ENCODE measurements at regions of chr20 and their contacts with region 1.

Region 1: DNA sequence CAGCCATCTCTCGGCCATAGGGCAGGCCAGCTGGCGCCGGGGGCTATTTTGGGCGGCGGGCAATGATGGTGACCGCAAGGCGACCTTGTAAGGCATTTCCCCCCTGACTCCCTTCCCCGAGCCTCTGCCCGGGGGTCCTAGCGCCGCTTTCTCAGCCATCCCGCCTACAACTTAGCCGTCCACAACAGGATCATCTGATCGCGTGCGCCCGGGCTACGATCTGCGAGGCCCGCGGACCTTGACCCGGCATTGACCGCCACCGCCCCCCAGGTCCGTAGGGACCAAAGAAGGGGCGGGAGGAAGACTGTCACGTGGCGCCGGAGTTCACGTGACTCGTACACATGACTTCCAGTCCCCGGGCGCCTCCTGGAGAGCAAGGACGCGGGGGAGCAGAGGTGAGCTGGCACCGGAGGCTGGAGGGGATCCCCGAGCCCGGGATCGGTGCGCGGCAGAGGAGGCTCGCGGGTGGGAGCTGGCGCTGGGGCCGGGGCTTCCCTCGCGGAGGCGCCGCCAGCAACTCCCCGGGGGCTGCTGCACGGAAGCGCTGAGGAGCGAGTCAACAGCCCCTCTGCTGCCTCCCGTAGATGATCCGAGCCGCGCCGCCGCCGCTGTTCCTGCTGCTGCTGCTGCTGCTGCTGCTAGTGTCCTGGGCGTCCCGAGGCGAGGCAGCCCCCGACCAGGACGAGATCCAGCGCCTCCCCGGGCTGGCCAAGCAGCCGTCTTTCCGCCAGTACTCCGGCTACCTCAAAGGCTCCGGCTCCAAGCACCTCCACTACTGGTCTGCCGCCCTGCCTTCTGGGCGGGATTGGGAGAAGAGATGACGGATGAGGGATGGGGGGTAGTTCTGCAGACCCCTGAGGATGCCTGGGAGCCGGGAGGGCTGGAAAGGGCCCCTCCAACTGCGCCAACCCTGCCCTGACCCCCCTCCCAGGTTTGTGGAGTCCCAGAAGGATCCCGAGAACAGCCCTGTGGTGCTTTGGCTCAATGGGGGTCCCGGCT is at the starts of genes CTSA and NEURL2:
- DNase-seq: peak; percentile 54
- H3K4me3 ChIP-seq: peak within 1 kb of the TSS; percentile 80
- CTCF ChIP-seq: peak; percentile 12

Region 2: DNA sequence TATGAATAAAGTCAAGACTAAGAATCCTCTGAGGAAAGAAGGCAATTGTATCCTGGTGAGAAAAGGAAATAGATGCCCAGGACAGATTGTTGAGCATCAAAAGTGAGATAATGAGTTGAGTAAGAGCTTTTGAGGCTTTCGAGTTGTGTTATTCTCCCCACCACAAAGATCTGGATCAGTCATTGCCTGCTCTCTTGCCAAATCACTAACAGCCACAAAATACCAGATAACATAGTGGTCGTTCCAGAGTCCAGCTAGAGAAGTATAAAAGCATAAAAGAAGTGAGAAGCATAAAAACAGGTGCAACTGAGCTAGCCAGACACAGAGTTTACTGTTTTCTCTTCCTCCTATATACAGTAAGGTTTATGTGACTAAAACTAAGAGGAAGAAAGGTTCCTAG is 164.2 kb before region 1 on chr20:
- CTCF ChIA-PET with region 1: no interaction called
- POLR2A ChIA-PET with region 1: no interaction called
- DNase-seq: no peak
- H3K4me3 ChIP-seq: no peak overlapping the region
- CTCF ChIP-seq: no peak

Region 3: GRCh38 chr20:45792332-45792686 is 99.0 kb before region 1 on chr20:
- CTCF ChIA-PET with region 1: no interaction called
- POLR2A ChIA-PET with region 1: no interaction called
- DNase-seq: no peak
- H3K4me3 ChIP-seq: peak overlapping the region; percentile 86
- CTCF ChIP-seq: no peak

Region 4: DNA sequence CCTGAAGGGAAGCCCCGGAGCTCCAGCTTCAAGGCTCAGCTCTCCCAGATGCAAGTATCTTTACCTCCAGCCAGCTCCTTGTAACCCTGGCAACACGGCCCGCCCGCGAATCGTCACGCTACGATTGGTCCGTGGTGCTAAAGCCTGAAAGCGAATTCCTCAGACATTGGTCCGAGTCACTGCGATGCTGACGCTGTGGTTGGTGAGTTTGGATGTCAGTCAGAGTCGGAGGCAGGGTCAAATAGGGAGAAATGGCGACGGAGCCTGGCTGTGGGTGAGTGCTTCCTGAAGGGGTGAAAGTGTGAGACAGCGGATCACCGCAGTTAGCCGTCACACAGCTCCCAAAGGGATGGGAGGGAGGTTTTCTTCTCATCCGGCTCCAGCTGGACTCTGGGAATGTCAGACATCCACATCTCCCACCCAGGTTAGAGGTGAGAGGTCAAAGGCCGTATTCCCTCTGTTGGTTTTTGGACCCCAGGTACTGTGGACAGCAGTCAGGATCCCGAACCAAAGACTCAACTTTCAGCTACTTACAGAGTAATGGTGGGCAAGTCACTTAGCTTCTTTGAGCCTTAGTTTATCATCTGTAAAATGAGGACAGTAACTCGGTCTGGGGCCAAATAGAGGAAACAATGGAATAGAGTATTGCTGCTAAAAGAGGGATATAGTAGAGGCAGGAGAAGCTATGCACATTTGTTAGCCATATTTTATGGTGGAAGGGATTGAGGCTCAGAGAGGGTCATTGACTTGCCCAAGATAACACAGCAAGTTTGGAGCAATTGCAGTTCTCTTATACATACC is 10.1 kb before region 1 on chr20 and contains the start of gene ZSWIM1:
- CTCF ChIA-PET with region 1: interaction called, 50 read pairs
- POLR2A ChIA-PET with region 1: interaction called, 21 read pairs
- DNase-seq: peak; percentile 94
- H3K4me3 ChIP-seq: peak within 1 kb of the TSS; percentile 82
- CTCF ChIP-seq: no peak

Region 5: DNA sequence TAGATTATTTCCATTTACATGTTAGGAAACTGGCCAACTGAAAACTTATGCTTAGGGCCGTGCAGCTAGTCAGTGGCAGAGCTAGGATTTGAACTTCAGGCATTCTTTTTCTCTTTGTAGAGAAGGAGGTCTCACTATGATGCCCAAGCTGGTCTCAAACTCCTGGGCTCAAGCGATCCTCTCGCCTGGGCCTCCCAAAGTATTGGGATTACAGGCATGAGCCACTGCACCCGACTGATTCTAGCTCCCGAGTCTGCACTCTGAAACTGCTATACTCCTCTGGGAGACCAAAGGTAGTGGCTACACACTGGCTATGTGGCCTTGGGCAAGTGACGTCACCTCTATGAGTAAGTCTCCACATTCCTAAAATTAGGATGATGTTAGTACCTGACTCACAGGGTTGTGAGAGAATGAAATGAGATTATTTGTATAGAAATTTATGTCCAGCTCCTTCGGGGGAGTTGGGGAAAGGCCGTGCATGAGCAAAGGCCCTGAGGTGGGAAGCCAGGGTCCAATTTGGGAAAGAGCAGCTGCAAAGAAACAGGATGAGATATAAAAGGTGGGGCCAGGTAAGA is 14.3 kb after region 1 on chr20:
- CTCF ChIA-PET with region 1: interaction called, 22 read pairs
- POLR2A ChIA-PET with region 1: interaction called, 4 read pairs
- DNase-seq: peak; percentile 34
- H3K4me3 ChIP-seq: no peak overlapping the region
- CTCF ChIP-seq: no peak

Region 6: DNA sequence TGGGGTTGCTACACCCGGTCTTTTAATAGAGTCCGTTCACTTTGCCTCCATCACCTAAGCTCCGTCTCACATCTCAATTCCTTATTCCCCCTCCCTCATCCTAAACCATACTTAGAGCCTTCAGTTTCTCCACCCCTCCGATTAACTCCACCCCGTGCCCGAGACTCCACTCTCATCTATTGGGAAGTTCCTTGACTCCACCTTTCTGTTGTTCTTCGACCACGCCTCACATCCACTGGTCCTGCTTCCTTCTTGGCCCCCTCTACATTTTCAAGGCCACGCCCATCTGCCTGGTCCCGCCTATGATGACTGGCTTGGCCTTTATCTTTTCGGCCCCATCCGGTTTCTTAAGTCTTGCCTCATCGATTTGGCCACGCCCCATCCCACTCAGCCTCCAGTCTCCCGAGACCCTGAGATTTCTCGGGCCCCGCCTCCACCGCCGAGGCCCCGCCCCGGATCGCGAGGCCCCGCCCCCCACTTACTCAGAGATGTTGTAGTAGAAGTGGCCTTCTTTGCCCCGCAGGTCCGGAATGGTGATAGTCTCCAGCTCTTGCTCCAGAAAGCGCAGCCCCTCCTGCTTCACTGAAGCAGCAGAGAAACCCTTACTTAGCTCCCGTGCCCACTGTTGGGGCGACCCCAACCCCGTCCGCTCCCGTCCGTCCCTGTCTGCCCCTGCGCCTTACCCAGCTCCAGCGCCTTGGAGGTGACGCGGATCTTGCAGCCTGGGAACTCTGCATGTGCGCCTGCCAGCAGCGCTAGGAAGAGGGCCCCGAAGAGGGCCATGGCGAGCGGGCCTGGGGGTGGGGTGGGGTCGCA is 19.6 kb after region 1 on chr20:
- CTCF ChIA-PET with region 1: interaction called, 22 read pairs
- POLR2A ChIA-PET with region 1: interaction called, 3 read pairs
- DNase-seq: peak; percentile 89
- H3K4me3 ChIP-seq: peak overlapping the region; percentile 57
- CTCF ChIP-seq: no peak

Region 7: DNA sequence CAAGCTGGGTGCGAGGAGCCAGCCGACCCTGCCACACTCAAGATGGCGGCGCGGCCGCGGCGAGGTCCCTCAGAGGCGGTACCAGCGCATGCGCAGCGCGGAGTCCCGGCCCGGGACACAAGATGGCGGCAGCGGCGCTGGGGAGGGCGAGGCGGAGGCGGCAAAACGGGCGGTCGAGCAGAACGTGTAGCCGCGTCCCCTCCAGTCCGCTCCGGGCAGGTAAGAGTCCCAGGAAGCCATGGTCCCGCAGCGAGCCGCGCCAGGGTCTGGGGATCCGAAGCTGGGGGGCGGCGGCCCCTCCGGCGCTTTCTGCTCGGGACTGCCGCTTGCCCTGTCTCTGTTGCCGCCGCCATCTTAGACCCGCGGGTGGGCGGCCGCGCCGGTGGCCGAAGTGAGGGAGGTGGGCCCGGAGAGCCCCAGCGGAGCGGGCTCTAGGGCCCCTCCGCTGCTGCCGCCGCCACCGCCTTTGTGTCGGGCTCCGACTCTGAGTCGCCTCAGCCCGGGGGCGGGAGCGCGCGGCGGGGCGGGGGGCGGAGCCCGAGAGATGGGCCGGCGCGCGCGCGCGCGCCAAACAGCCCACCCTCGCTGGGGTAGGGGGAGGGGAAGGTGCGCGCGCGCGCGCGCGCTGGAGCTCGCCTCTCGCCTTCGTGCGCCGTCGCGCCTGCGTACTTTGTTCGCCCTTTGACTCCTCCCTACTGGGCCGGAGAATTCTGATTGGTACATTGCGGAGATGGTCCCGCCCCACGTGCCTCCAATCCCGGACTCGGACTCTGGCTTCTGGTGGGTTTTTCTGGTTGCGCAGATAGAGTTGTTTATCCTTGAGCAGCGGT is 43.5 kb after region 1 on chr20 and contains the start of gene PCIF1:
- CTCF ChIA-PET with region 1: interaction called, 10 read pairs
- POLR2A ChIA-PET with region 1: interaction called, 11 read pairs
- DNase-seq: peak; percentile 67
- H3K4me3 ChIP-seq: peak within 1 kb of the TSS; percentile 99
- CTCF ChIP-seq: no peak

Region 8: DNA sequence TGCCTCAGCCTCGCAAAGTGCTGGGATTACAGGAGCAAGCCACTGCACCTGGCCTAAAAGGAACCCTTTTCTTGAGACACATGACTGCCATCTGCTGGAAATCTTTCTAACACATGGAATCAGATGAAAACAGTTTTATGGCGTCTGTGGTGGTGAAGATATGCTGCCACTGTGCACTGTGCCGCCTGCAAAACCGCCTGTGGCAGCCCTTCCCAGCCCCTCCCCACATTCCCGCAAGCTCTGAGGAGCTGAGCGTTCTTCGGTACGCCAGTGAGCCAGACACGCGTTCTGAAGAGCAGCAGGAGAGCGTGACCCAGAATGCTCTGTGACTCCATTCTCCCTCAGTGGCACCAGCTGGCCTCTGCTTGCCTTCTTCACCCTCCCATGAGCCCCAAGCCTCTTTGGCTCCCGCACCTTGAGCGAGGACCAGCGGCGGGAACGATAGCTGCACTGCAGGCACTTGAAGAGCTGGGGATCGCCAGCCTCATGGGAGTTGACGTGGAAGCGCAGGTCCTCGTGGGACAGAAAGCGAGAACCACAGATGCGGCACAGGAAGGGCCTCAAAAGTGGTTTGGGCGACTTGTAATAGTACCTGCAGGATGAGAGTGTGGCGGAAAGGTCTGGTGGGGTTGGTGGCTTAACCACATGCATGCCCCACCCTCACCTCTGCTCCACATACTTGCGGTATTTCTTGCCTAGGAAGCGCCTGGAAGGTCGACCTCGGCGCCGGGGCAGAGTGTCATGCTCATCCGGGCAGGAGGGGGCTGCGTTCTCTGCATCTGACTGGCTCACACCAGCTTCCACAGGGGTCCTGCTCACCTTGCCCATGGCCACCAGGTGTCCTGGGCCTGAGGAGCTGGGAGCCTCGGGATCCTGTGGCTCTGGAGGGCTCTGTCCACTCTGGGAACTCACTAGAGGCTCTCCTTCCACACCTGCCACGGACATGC is 72.0 kb after region 1 on chr20:
- CTCF ChIA-PET with region 1: interaction called, 43 read pairs
- POLR2A ChIA-PET with region 1: no interaction called
- DNase-seq: no peak
- H3K4me3 ChIP-seq: no peak overlapping the region
- CTCF ChIP-seq: peak; percentile 26